Sciatic nerve (tissue), 2 donors: ENCODE measurements at regions of chr19 and their contacts with region 1.

Region 1: DNA sequence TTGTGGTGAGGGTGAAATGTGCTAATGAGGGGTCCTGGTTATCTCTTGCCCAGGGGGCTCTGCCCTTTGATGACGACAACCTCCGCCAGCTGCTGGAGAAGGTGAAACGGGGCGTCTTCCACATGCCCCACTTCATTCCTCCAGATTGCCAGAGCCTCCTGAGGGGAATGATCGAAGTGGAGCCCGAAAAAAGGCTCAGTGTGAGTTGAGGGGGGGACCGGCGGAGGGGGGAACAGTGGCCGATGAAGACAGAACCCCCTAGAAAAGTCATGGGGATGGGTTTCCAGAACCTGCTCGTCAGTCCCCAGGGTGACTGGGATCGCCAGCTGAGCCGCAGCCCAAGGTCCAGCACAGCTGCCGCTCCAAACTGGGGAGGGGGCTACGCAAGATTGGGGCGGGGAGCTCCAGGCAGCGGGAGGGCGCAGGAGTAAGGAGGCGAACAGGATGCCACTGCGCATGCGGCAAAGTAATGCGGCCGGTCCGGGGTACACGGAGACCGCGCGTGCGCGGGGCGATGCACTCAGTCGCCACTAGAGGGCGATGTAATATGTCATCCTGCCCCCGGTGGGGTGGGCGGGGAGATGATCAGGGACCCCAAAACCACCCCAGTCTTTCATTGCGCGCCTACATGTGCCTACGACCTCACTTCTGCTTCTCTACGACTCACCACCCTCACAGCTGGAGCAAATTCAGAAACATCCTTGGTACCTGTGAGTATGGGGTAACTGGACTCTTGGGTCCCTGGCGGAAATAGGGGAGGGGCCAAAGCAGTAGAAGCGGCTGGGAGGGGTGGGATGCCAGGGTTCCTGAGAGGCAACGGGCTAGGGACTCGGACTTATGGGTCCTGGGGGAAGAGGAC is 17.9 kb downstream of the BRSK1 start:
- DNase-seq: peak; percentile 95
- ATAC-seq: peak; percentile 93

Region 2: DNA sequence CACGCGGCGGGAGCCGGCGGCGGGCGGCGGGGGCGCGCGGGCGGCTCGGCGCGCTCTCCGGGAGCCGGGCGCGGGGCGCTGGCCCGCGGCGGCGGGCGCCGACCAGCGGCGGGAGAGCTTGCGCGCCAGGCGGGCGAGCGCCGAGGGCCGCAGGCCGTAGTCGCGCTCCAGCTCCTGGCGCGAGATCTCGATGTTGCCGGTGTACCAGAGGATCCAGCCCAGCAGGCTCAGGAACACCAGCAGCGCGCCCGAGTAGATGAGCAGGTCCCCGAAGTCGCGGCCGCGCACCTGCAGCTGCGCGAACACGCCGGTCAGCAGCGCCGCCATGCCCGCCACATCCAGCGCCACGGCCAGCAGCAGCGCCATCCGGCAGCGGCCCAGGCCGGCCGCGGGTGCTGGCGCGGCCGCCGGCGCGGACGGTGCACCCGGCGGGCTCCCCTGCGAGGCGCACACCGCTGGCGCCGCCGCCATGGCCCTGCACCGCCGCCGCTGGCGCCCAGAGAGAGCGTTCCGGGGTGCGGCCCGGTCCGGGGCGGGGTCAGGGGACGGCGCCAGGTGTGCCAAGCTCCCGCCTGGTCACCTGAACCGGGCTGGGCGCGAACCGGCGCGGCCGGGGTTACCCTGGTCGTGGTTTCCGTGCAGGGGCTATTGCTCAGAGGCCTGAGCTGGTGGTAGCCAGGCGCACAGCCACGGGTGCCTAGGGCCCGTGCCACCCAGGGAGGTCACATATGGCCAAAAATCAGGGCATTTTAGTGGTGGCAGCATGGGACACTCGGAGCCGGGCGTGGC is 82.3 kb after region 1 on chr19 and contains the start of gene TMEM238:
- intact Hi-C with region 1: loop called (anchors 5 kb)
- DNase-seq: peak; percentile 70
- ATAC-seq: no peak
- total RNA-seq, gene TMEM238: 2.9 TPM